AG04450 (cell line): ENCODE measurements at regions of chr21 and their contacts with region 1.

Region 1: GRCh38 chr21:16932314-16932713 is 580.5 kb upstream of the CXADR start:
- DNase-seq: no peak
- H3K4me3 ChIP-seq: no peak overlapping the region
- H3K27ac ChIP-seq: no peak overlapping the region
- H3K27me3 ChIP-seq: no peaks in the 10 kb centered on the region
- CTCF ChIP-seq: no peak

Region 2: GRCh38 chr21:16678429-16679160 is 253.7 kb before region 1 on chr21:
- CTCF ChIA-PET with region 1: no interaction called
- POLR2A ChIA-PET with region 1: interaction called, 11 read pairs
- DNase-seq: no peak
- H3K4me3 ChIP-seq: no peak overlapping the region
- H3K27ac ChIP-seq: no peak overlapping the region
- H3K27me3 ChIP-seq: no peaks in the 10 kb centered on the region
- CTCF ChIP-seq: no peak